ENCODE measurements at regions of chr15 and their contacts with region 1.

Region 1: DNA sequence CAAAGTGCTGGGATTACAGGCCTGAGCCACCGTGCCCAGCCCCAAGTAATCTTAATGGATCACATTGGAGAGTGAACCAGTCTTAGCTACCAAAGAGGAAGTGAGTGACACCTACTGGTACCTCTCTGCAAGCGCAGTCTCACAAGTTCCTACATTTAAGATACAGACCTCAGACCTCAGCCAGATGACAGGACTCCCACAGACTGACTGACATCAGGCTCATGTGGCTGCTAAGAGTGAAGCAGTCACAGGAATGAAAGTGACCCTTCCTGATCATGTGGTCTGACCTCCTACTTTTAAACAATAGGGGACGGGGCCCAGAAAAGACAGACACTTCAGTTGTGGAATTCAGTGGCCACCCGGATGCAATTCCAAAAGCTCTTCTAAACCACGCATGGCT is 36.3 kb upstream of the GNB5 start:
- H3K4me3 ChIP-seq: no peak overlapping the region
- H3K27ac ChIP-seq: no peak overlapping the region
- H3K4me1 ChIP-seq: no peaks in the 10 kb centered on the region
- CTCF ChIP-seq: no peak

Region 2: GRCh38 chr15:52217186-52217585 is 10.3 kb before region 1 on chr15:
- CTCF ChIA-PET with region 1: interaction called, 12 read pairs
- POLR2A ChIA-PET with region 1: interaction called, 3 read pairs
- H3K4me3 ChIP-seq: no peak overlapping the region
- H3K27ac ChIP-seq: no peak overlapping the region
- H3K4me1 ChIP-seq: no peaks in the 10 kb centered on the region
- CTCF ChIP-seq: no peak

Region 3: GRCh38 chr15:52278636-52279370 is 51.3 kb after region 1 on chr15:
- CTCF ChIA-PET with region 1: no interaction called
- POLR2A ChIA-PET with region 1: no interaction called
- H3K4me3 ChIP-seq: no peak overlapping the region
- H3K27ac ChIP-seq: no peak overlapping the region
- H3K4me1 ChIP-seq: no peaks in the 10 kb centered on the region
- CTCF ChIP-seq: no peak

Measured in HEK293 (cell line).